H1 (cell line): ENCODE measurements at regions of chr10 and their contacts with region 1.

Region 1: GRCh38 chr10:52740913-52741675 is 31.5 kb downstream of the MBL2 start:
- DNase-seq: peak; percentile 31 to 94
- H3K4me3 ChIP-seq: no peak overlapping the region
- H3K27ac ChIP-seq: no peak overlapping the region
- H3K4me1 ChIP-seq: no peaks in the 10 kb centered on the region
- H3K27me3 ChIP-seq: no peaks in the 10 kb centered on the region
- CTCF ChIP-seq: peak; percentile 73 to 95 (median 94)
- EP300 ChIP-seq: no peak
- POLR2A ChIP-seq: no peak
- RAD21 ChIP-seq: peak; percentile 81 to 89

Region 2: GRCh38 chr10:52551046-52551445 is 190.0 kb before region 1 on chr10:
- CTCF ChIA-PET with region 1: no interaction called
- POLR2A ChIA-PET with region 1: no interaction called
- DNase-seq: no peak
- H3K4me3 ChIP-seq: no peak overlapping the region
- H3K27ac ChIP-seq: no peak overlapping the region
- H3K4me1 ChIP-seq: no peaks in the 10 kb centered on the region
- H3K27me3 ChIP-seq: no peaks in the 10 kb centered on the region
- CTCF ChIP-seq: no peak
- EP300 ChIP-seq: no peak
- POLR2A ChIP-seq: no peak
- RAD21 ChIP-seq: no peak

Region 3: GRCh38 chr10:52720018-52720417 is 21.1 kb before region 1 on chr10:
- CTCF ChIA-PET with region 1: interaction called, 10 read pairs
- POLR2A ChIA-PET with region 1: no interaction called
- DNase-seq: no peak
- H3K4me3 ChIP-seq: no peak overlapping the region
- H3K27ac ChIP-seq: no peak overlapping the region
- H3K4me1 ChIP-seq: no peaks in the 10 kb centered on the region
- H3K27me3 ChIP-seq: no peaks in the 10 kb centered on the region
- CTCF ChIP-seq: no peak
- EP300 ChIP-seq: no peak
- POLR2A ChIP-seq: no peak
- RAD21 ChIP-seq: no peak

Region 4: GRCh38 chr10:52729271-52730104 is 11.6 kb before region 1 on chr10:
- CTCF ChIA-PET with region 1: interaction called, 11 read pairs
- POLR2A ChIA-PET with region 1: no interaction called
- DNase-seq: no peak
- H3K4me3 ChIP-seq: no peak overlapping the region
- H3K27ac ChIP-seq: no peak overlapping the region
- H3K4me1 ChIP-seq: no peaks in the 10 kb centered on the region
- H3K27me3 ChIP-seq: no peaks in the 10 kb centered on the region
- CTCF ChIP-seq: peak in 2 of 3 experiments; percentile 28 to 38; a peak in 2 of 4 replicates
- EP300 ChIP-seq: no peak
- POLR2A ChIP-seq: no peak
- RAD21 ChIP-seq: peak; percentile 67 to 69

Region 5: GRCh38 chr10:52785418-52785817 is 44.3 kb after region 1 on chr10:
- CTCF ChIA-PET with region 1: interaction called, 127 read pairs
- POLR2A ChIA-PET with region 1: no interaction called
- DNase-seq: no peak
- H3K4me3 ChIP-seq: no peak overlapping the region
- H3K27ac ChIP-seq: no peak overlapping the region
- H3K4me1 ChIP-seq: no peaks in the 10 kb centered on the region
- H3K27me3 ChIP-seq: no peaks in the 10 kb centered on the region
- CTCF ChIP-seq: no peak
- EP300 ChIP-seq: no peak
- POLR2A ChIP-seq: no peak
- RAD21 ChIP-seq: no peak

Region 6: GRCh38 chr10:52836816-52837215 is 95.7 kb after region 1 on chr10:
- CTCF ChIA-PET with region 1: no interaction called
- POLR2A ChIA-PET with region 1: no interaction called
- DNase-seq: no peak
- H3K4me3 ChIP-seq: no peak overlapping the region
- H3K27ac ChIP-seq: no peak overlapping the region
- H3K4me1 ChIP-seq: no peaks in the 10 kb centered on the region
- H3K27me3 ChIP-seq: no peaks in the 10 kb centered on the region
- CTCF ChIP-seq: no peak
- EP300 ChIP-seq: no peak
- POLR2A ChIP-seq: no peak
- RAD21 ChIP-seq: no peak